CD14-positive monocyte (primary cell): ENCODE measurements at regions of chr2 and their contacts with region 1.

Region 1: GRCh38 chr2:39436592-39437510 is at the start of gene MAP4K3:
- DNase-seq: peak; percentile 90 to 92 (median 91)
- H3K4me3 ChIP-seq: peak within 1 kb of the TSS; percentile 67 to 94 (median 82)
- H3K4me3 Mint-ChIP-seq: peak within 1 kb of the TSS; percentile 93 to 97
- H3K27ac ChIP-seq: peak within 1 kb of the TSS; percentile 56 to 75
- H3K27ac Mint-ChIP-seq: peak within 1 kb of the TSS; percentile 66 to 93 (median 88)
- H3K4me1 ChIP-seq: peaks cover 28 to 37% of the 10 kb centered on the region in 2 donors
- H3K4me1 Mint-ChIP-seq: peaks cover 32% of the 10 kb centered on the region
- H3K27me3 ChIP-seq: no peaks in the 10 kb centered on the region
- H3K27me3 Mint-ChIP-seq: peaks cover 0 to 4% (median 2%) of the 10 kb centered on the region in 3 donors
- CTCF ChIP-seq: no peak
- polyA plus RNA-seq, gene MAP4K3: 1.0 to 8.0 (median 4.0) TPM

Region 2: DNA sequence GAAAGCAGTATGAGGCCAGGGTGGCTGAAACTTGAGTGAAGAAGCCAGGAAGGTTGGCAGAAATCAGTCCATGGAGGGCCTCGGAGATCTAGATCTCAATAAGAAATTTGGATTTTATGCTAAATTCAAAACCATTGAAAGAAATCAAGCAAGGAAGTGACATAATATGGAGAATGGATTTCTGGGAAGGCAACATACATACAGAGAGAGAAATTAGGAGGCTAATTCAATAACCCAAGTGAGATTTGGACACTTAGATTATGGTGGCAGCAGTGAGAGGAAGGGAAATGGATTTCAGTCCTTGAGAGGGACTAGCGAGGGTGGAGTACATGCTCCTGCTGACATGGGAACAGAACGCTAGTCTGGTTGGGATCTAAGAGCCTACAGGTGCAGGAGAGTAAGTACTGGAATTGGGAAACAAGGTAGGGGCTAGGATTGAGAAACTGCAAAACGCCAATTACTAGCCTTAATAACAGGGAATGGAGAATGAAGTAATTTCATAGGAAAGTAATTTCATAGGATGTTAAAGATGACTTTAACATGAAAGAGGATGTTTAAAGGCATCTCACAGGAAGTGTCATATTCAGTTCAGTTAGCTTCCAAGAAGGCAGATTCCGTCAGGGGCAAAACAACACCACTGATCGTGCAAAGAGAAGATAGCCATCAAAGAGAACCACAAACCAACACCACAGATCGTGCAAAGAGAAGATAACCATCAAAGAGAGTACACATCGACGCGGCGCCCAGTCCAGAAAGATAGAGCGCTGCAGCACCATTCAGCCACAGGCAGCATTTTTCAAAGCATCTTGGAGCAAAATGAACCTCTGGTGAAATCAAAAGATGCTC is 220.3 kb before region 1 on chr2:
- intact Hi-C with region 1: no loop called
- DNase-seq: no peak
- H3K4me3 ChIP-seq: no peak overlapping the region
- H3K4me3 Mint-ChIP-seq: peak overlapping the region in 1 of 2 donors; percentile 80
- H3K27ac ChIP-seq: no peak overlapping the region
- H3K27ac Mint-ChIP-seq: peak overlapping the region in 1 of 7 donors; percentile 47
- H3K4me1 ChIP-seq: peaks cover 6 to 8% of the 10 kb centered on the region in 2 donors
- H3K4me1 Mint-ChIP-seq: peaks cover 10% of the 10 kb centered on the region
- H3K27me3 ChIP-seq: no peaks in the 10 kb centered on the region
- H3K27me3 Mint-ChIP-seq: peaks cover 0 to 1% (median 0%) of the 10 kb centered on the region in 3 donors
- CTCF ChIP-seq: no peak

Region 3: GRCh38 chr2:39469807-39470206 is 33.0 kb after region 1 on chr2:
- intact Hi-C with region 1: loop called in 1 of 2 experiments (anchors 5 kb)
- DNase-seq: peak; percentile 24 to 48 (median 44)
- H3K4me3 ChIP-seq: no peak overlapping the region
- H3K4me3 Mint-ChIP-seq: no peak overlapping the region
- H3K27ac ChIP-seq: no peak overlapping the region
- H3K27ac Mint-ChIP-seq: peak overlapping the region in 1 of 7 donors; percentile 58
- H3K4me1 ChIP-seq: peaks cover 10 to 12% of the 10 kb centered on the region in 2 donors
- H3K4me1 Mint-ChIP-seq: peaks cover 22% of the 10 kb centered on the region
- H3K27me3 ChIP-seq: no peaks in the 10 kb centered on the region
- H3K27me3 Mint-ChIP-seq: peaks cover 0 to 4% (median 0%) of the 10 kb centered on the region in 3 donors
- CTCF ChIP-seq: no peak

Region 4: DNA sequence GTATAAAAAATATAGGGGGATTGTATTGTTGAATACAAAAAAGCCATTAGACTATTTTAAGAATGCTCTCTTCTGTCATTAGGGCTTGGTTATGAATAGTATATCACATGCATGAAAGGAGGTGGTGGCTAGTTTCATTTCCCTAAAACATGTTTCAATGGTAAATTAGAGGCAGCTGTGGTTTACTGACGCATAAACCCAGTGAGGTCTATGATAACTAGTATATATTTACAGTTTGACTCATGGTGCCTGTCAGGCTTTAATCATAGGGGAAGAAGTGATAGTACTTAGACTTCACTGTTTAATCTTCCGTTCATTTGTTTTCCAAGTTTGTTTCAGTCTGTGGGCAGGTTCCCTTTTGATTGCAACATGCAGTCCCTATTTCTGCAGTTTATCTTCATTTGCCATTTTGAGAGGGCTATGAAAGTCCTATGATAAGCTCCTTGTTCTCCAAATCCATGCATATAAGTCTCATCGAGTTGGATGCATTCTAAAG is 55.3 kb after region 1 on chr2:
- intact Hi-C with region 1: loop called in 1 of 2 experiments (anchors 5 kb)
- DNase-seq: peak; percentile 93 to 99 (median 97)
- H3K4me3 ChIP-seq: peak overlapping the region in 2 of 3 experiments; percentile 31 to 58
- H3K4me3 Mint-ChIP-seq: peak overlapping the region; percentile 41 to 74
- H3K27ac ChIP-seq: peak overlapping the region; percentile 0 to 94
- H3K27ac Mint-ChIP-seq: peak overlapping the region; percentile 96 to 100 (median 98)
- H3K4me1 ChIP-seq: peaks cover 25 to 52% of the 10 kb centered on the region in 2 donors
- H3K4me1 Mint-ChIP-seq: peaks cover 48% of the 10 kb centered on the region
- H3K27me3 ChIP-seq: no peaks in the 10 kb centered on the region
- H3K27me3 Mint-ChIP-seq: peaks cover 5 to 6% (median 6%) of the 10 kb centered on the region in 3 donors
- CTCF ChIP-seq: no peak

Region 5: DNA sequence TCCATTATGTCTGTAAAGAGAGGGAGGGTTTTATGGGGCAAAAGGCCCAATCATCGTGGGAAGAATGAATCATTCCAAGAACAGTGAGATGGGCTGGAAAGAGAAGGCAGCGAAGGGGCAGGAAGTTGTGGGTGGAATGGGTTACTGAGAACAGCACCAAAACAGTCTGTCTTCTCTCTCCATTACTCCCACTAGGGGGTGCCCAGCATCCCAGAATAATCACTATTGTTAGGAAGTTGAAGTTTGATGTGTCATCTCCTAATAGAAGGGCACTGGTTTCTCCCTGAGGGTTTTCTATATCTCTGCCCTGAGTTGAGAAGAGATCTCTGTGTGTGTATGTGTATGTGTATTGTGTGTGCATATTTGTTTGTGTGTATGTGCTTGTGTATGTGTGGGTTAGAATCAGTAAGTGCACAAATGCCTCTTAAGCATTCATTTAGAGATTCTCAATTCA is 76.8 kb after region 1 on chr2:
- intact Hi-C with region 1: loop called in 1 of 2 experiments (anchors 10 kb)
- DNase-seq: peak; percentile 56 to 75 (median 71)
- H3K4me3 ChIP-seq: no peak overlapping the region
- H3K4me3 Mint-ChIP-seq: no peak overlapping the region
- H3K27ac ChIP-seq: no peak overlapping the region
- H3K27ac Mint-ChIP-seq: peak overlapping the region in 3 of 7 donors; percentile 6 to 60 (median 41)
- H3K4me1 ChIP-seq: no peaks in the 10 kb centered on the region
- H3K4me1 Mint-ChIP-seq: peaks cover 14% of the 10 kb centered on the region
- H3K27me3 ChIP-seq: no peaks in the 10 kb centered on the region
- H3K27me3 Mint-ChIP-seq: no peaks in the 10 kb centered on the region
- CTCF ChIP-seq: peak; percentile 72